ENCODE measurements at regions of chr2 and their contacts with region 1.

Region 1: DNA sequence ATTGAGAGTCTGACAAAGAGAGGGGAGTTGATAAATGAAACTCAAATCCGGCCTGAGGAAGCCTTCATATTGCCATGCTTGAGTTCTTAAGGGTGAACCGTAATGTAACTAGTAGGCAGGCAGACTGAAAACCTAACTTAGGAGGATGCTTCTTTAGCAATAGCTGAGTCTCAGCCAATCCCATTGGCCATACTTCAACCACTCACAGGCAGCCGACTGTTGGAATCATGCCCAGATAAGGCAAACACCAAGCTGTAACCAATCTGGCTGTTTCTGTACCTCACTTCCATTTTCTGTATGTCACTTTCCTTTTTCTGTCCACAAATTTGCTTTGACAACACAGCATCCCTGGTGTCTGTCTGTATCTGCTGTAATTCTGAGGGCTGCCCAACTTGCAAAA is 39.5 kb downstream of the TPRKB start:
- DNase-seq: no peak
- ATAC-seq: no peak
- H3K4me3 ChIP-seq: no peak overlapping the region
- H3K4me3 Mint-ChIP-seq: no peak overlapping the region
- H3K27ac ChIP-seq: no peak overlapping the region
- H3K27ac Mint-ChIP-seq: no peak overlapping the region
- H3K4me1 ChIP-seq: no peaks in the 10 kb centered on the region
- H3K4me1 Mint-ChIP-seq: no peaks in the 10 kb centered on the region
- H3K27me3 ChIP-seq: peaks cover 0 to 14% (median 2%) of the 10 kb centered on the region in 4 experiments
- H3K27me3 Mint-ChIP-seq: peaks cover 27% of the 10 kb centered on the region
- CTCF ChIP-seq: no peak

Region 2: DNA sequence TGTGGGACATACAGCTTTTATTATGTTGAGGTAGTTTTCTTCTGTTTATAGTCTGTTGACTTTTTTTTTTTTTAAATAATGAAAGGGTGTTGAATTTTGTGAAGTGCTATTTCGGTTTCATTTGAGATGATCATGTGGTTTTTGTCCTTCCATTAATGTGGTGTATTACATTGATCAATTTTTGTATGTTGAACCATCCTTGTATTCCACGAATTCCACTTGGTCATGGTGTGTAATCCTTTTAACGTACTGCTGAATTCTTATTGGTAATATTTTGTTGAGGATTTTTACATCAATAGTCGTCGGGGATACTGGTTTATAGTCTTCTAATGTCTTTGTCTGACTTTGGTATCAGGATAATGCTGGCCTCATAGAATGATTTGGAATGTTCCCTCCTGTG is 293.2 kb before region 1 on chr2:
- CTCF ChIA-PET with region 1: no interaction called
- POLR2A ChIA-PET with region 1: no interaction called
- intact Hi-C with region 1: no loop called
- DNase-seq: no peak
- ATAC-seq: no peak
- H3K4me3 ChIP-seq: no peak overlapping the region
- H3K4me3 Mint-ChIP-seq: no peak overlapping the region
- H3K27ac ChIP-seq: no peak overlapping the region
- H3K27ac Mint-ChIP-seq: no peak overlapping the region
- H3K4me1 ChIP-seq: no peaks in the 10 kb centered on the region
- H3K4me1 Mint-ChIP-seq: no peaks in the 10 kb centered on the region
- H3K27me3 ChIP-seq: no peaks in the 10 kb centered on the region
- H3K27me3 Mint-ChIP-seq: no peaks in the 10 kb centered on the region
- CTCF ChIP-seq: no peak

Region 3: DNA sequence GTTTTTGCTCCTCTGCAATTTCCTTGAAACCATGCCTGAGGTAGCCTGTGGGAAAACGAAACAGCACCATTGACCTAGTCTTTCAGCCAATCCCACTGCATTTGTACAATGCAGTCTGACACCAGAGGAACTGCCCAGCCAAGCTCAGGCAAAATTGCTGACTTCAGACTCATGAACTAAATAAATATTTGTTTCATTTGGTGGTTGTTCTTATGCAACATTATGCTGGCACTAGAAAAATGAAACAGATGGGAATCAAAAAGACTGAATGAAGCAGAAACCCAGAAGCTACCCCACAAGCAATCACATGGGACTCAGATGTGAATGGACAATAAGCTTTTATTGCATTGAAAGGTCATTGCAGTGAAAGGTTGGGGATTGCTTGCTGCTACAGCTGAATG is 57.1 kb before region 1 on chr2:
- CTCF ChIA-PET with region 1: no interaction called
- POLR2A ChIA-PET with region 1: no interaction called
- intact Hi-C with region 1: loop called (anchors 2 kb)
- DNase-seq: no peak
- ATAC-seq: no peak
- H3K4me3 ChIP-seq: no peak overlapping the region
- H3K4me3 Mint-ChIP-seq: no peak overlapping the region
- H3K27ac ChIP-seq: no peak overlapping the region
- H3K27ac Mint-ChIP-seq: no peak overlapping the region
- H3K4me1 ChIP-seq: no peaks in the 10 kb centered on the region
- H3K4me1 Mint-ChIP-seq: no peaks in the 10 kb centered on the region
- H3K27me3 ChIP-seq: peaks cover 0 to 3% (median 0%) of the 10 kb centered on the region in 4 experiments
- H3K27me3 Mint-ChIP-seq: peaks cover 26% of the 10 kb centered on the region
- CTCF ChIP-seq: no peak

Measured in B cell (primary cell).